Prostate gland (tissue), 2 donors: ENCODE measurements at regions of chr14 and their contacts with region 1.

Region 1: GRCh38 chr14:32252030-32252670 is 49.1 kb upstream of the RNU6-8 start:
- DNase-seq: peak; percentile 69
- H3K4me3 ChIP-seq: no peak overlapping the region
- H3K27ac ChIP-seq: no peak overlapping the region
- H3K4me1 ChIP-seq: no peaks in the 10 kb centered on the region
- H3K27me3 ChIP-seq: no peaks in the 10 kb centered on the region
- CTCF ChIP-seq: peak; percentile 63 to 87 (median 82)
- POLR2A ChIP-seq: no peak

Region 2: GRCh38 chr14:31510222-31510621 is 741.9 kb before region 1 on chr14:
- intact Hi-C with region 1: loop called (anchors 5 kb)
- DNase-seq: no peak
- H3K4me3 ChIP-seq: no peak overlapping the region
- H3K27ac ChIP-seq: no peak overlapping the region
- H3K4me1 ChIP-seq: no peaks in the 10 kb centered on the region
- H3K27me3 ChIP-seq: no peaks in the 10 kb centered on the region
- CTCF ChIP-seq: peak; percentile 47 to 84 (median 64)
- POLR2A ChIP-seq: no peak

Region 3: DNA sequence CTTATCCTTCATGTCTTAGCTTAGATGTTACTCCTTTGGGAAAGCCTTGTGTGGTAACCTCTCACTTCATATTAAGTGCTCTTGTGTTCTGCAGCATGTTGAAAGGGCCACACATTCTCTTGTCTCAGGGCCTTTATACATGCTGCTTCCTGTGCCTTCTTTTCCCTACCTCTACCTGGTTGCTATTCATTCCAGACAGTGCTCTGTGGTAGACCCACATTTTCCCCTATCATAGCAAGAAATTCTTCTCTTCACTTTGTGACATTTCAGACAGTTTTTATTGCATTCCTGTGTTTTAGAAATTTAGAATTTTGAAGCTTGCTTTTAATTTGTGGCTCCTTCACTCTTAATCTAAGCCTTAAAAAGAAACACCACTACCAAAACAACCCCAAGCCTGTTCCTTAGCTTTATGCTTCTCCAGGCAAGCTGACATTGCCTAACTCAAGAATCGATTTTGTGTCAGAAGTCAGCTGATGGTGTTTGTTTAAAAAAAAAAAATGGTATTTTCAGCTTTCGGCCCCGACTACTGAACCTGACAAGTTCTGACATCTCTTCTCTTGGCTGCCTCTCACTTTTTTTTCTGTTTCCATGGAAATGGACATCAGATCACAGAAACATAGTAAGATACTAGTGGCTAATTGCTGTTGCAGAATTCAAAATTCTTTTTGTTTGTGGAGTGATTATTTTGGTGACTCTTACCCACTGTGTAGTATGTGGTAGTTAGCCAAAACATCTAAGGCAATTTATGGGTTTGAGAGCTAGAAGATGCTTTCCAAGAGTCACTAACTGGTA is 534.7 kb before region 1 on chr14:
- intact Hi-C with region 1: no loop called
- DNase-seq: no peak
- H3K4me3 ChIP-seq: no peak overlapping the region
- H3K27ac ChIP-seq: no peak overlapping the region
- H3K4me1 ChIP-seq: no peaks in the 10 kb centered on the region
- H3K27me3 ChIP-seq: no peaks in the 10 kb centered on the region
- CTCF ChIP-seq: no peak
- POLR2A ChIP-seq: no peak

Region 4: DNA sequence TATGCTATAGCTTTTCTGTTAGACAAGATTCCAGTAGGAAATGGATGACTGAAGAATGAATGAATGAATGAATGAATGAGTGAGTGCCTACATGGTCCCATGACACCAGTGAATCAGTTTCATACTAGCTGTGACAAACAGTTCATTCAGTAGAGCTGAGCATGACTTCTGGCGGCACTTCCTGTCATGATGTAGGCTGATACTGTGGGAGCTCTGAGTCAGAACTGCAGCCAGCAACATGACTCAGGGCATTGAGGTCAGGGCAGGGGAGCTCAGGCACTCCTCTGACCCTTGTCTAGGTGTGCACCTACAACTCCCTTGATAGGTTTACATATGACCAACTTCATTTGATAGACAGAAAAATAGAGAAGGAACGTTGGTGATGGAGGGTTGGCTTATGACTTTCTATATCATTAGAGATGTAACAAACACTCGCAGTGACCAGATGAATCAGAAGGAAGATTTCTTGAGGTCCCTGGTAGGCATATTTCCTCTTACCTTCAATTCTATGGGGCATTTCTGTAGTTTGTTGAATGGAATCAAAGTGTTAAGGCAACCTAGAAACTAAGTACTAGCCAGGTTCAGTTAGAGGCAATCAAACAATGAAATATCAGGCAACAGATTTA is 314.3 kb before region 1 on chr14:
- intact Hi-C with region 1: loop called (anchors 5 kb)
- DNase-seq: no peak
- H3K4me3 ChIP-seq: no peak overlapping the region
- H3K27ac ChIP-seq: no peak overlapping the region
- H3K4me1 ChIP-seq: no peaks in the 10 kb centered on the region
- H3K27me3 ChIP-seq: no peaks in the 10 kb centered on the region
- CTCF ChIP-seq: no peak
- POLR2A ChIP-seq: no peak

Region 5: GRCh38 chr14:32076278-32077080 is 175.7 kb before region 1 on chr14:
- intact Hi-C with region 1: loop called (anchors 2 kb)
- DNase-seq: peak; percentile 95
- H3K4me3 ChIP-seq: peak overlapping the region; percentile 94 to 97
- H3K27ac ChIP-seq: peak overlapping the region; percentile 99 to 100
- H3K4me1 ChIP-seq: no peaks in the 10 kb centered on the region
- H3K27me3 ChIP-seq: no peaks in the 10 kb centered on the region
- CTCF ChIP-seq: no peak
- POLR2A ChIP-seq: peak; percentile 73

Region 6: DNA sequence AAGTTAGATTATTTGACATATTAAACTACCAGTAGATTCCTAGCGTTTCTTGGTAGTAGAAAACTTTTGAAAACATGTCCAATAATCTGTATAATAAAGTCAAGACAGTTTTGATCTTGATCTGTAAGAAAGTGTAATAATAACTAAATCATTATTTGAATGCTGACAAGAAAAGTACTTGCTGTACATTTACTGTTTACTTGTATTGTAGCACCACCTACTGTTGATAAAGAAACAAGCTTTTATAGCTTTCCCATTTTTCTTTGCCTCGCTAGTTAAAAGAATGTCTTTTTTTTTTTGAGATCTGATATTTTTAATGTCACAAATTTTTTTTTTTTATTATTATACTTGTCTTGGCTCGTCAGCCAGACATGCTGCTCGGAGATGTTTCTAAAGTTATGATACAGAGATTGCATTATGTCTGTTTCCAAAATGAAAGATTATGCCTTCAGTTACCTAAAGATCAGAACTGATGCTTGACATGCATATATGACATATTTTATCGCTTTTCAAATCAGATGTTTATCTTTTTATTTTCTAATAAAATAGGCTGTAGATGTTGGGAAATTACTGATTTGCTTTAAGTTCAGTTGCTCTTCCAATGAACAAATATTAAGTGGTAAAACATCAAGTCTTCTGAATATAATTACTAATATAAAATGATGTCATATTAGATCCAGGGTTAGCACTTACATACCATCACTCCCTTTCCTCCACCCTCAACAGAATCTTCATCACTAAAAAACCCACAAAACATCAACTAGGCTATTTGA is 217.4 kb after region 1 on chr14:
- intact Hi-C with region 1: loop called (anchors 2 kb)
- DNase-seq: no peak
- H3K4me3 ChIP-seq: no peak overlapping the region
- H3K27ac ChIP-seq: no peak overlapping the region
- H3K4me1 ChIP-seq: peaks cover 5% of the 10 kb centered on the region
- H3K27me3 ChIP-seq: no peaks in the 10 kb centered on the region
- CTCF ChIP-seq: peak in 3 of 4 experiments; percentile 42 to 69 (median 66)
- POLR2A ChIP-seq: no peak

Region 7: DNA sequence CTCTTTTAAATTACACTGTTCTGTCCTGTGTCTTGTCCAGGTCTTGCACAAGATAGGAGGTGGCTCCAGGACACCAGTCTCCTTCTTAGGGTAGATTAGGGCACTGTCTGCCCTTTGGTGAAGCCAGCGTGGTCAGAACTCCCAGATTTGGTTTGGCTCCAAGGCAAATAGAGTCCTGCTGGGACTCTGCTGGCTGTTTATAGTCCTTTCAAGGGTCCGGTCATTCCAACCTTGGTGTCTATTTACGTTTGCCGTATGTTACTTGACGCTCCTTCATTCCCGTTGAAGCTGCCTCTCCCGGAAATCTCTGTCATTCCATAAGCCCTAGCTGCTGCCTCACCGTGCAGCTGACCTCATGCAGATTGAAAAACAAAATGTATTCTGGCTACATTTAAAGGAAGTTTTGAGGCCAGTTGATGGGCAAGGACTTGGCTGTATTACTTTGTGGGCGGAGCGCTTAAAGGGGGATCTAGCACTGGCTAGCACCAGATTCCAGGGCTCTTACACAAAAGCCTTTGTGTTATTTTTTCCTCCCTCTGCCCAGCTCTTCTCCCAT is 257.6 kb after region 1 on chr14:
- intact Hi-C with region 1: loop called (anchors 5 kb)
- DNase-seq: peak; percentile 73
- H3K4me3 ChIP-seq: no peak overlapping the region
- H3K27ac ChIP-seq: peak overlapping the region in 1 of 2 donors; percentile 21
- H3K4me1 ChIP-seq: no peaks in the 10 kb centered on the region
- H3K27me3 ChIP-seq: no peaks in the 10 kb centered on the region
- CTCF ChIP-seq: no peak
- POLR2A ChIP-seq: no peak

Region 8: GRCh38 chr14:32560209-32560857 is 308.2 kb after region 1 on chr14:
- intact Hi-C with region 1: loop called (anchors 5 kb)
- DNase-seq: peak; percentile 60
- H3K4me3 ChIP-seq: no peak overlapping the region
- H3K27ac ChIP-seq: no peak overlapping the region
- H3K4me1 ChIP-seq: peaks cover 3% of the 10 kb centered on the region
- H3K27me3 ChIP-seq: no peaks in the 10 kb centered on the region
- CTCF ChIP-seq: peak; percentile 61 to 92 (median 75)
- POLR2A ChIP-seq: no peak